Activated T-helper 1 cell treated with anti-CD3 and anti-CD28 coated beads, Interleukin-12 subunit alpha, Interleukin-12 subunit beta, Interleukin-2, Interleukin-4 antibody, amounts not matched to agents 30 ng/mL and 10 ng/mL and 1 ng/mL, durations not matched to agents 14 hours and 24 hours and 36 hours (primary cell): ENCODE measurements at regions of chr9 and their contacts with region 1.

Region 1: GRCh38 chr9:111896353-111896958 is at the start of gene UGCG:
- DNase-seq: peak; percentile 86
- H3K4me3 Mint-ChIP-seq: peak within 1 kb of the TSS; percentile 90
- H3K27ac Mint-ChIP-seq: peak within 1 kb of the TSS; percentile 87
- H3K4me1 Mint-ChIP-seq: peaks cover 19% of the 10 kb centered on the region
- H3K27me3 Mint-ChIP-seq: peaks cover 4% of the 10 kb centered on the region
- total RNA-seq, gene UGCG: 22.6 and 22.9 TPM in 2 replicates

Region 2: GRCh38 chr9:111661150-111661801 is 235.2 kb before region 1 on chr9 and contains the start of gene GNG10:
- intact Hi-C with region 1: loop called (anchors 5 kb)
- DNase-seq: peak; percentile 66
- H3K4me3 Mint-ChIP-seq: peak within 1 kb of the TSS; percentile 89
- H3K27ac Mint-ChIP-seq: peak within 1 kb of the TSS; percentile 89
- H3K4me1 Mint-ChIP-seq: peaks cover 34% of the 10 kb centered on the region
- H3K27me3 Mint-ChIP-seq: no peaks in the 10 kb centered on the region
- total RNA-seq, gene GNG10: 30.7 and 35.4 TPM in 2 replicates

Region 3: GRCh38 chr9:111937781-111938426 is 41.4 kb after region 1 on chr9:
- intact Hi-C with region 1: loop called (anchors 1 kb)
- DNase-seq: peak; percentile 28
- H3K4me3 Mint-ChIP-seq: peak overlapping the region; percentile 63
- H3K27ac Mint-ChIP-seq: peak overlapping the region; percentile 88
- H3K4me1 Mint-ChIP-seq: peaks cover 31% of the 10 kb centered on the region
- H3K27me3 Mint-ChIP-seq: no peaks in the 10 kb centered on the region

Region 4: DNA sequence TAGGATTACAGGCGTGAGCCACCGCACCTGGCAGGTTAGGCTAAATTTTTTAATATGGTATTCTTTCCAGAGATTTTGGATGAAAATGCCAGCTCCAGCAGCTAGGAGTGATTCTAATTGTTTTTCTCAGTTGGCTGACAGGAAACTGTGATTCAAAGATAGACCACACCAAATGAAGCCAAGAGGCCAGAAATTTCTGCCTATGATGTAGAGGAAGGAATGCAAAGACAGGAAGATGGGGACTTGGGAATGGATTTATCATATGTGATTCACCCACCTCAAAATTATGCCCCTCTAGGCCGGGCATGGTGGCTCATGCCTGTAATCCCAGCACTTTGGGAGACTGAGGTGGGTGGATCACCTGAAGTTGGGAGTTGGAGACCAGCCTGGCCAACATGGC is 53.5 kb after region 1 on chr9:
- intact Hi-C with region 1: no loop called
- DNase-seq: no peak
- H3K4me3 Mint-ChIP-seq: no peak overlapping the region
- H3K27ac Mint-ChIP-seq: no peak overlapping the region
- H3K4me1 Mint-ChIP-seq: peaks cover 10% of the 10 kb centered on the region
- H3K27me3 Mint-ChIP-seq: peaks cover 11% of the 10 kb centered on the region

Region 5: DNA sequence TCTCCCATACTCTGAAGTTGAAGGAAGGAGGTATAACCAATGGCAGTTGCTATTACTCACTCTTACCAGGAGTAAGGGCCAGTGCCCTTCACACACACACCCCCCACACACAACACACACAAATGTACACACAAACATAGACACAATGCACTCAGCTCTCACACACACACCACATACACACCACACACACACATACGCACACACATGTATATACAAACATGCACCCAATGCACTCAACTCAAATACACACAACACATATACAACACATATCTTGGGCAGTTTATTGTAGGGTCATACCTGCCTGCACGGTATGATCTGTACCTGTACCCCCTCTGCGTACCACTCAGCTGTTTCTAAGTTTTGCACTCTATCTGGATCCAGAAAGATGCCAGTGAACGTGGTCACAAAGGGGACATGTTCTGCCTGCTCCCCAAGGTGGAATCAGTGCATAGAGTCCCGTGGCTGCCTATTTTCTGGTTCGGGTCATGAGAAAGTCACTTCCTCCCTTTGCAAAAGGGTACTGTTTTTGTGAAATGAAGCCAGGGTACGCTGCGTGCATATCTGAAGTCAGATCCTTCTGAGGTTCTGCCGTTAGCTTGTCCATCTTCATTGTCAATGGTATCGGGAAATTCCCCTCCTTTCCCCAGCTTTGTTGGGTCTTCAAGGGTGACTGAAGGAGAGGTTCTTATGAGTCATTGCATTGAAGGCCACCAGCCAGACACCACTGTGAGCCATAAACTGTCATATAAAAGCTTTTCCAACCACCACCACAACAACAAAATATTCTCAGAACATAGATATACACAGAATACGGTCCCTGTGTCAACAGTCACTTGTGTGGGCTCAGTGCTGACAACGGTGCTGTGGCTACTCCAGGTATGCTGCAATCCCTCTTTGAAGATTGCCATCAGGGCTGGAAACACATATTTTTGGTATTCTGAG is 132.1 kb after region 1 on chr9:
- intact Hi-C with region 1: loop called (anchors 2 kb)
- DNase-seq: peak; percentile 6
- H3K4me3 Mint-ChIP-seq: peak overlapping the region; percentile 5
- H3K27ac Mint-ChIP-seq: peak overlapping the region; percentile 49
- H3K4me1 Mint-ChIP-seq: peaks cover 48% of the 10 kb centered on the region
- H3K27me3 Mint-ChIP-seq: peaks cover 4% of the 10 kb centered on the region

Region 6: DNA sequence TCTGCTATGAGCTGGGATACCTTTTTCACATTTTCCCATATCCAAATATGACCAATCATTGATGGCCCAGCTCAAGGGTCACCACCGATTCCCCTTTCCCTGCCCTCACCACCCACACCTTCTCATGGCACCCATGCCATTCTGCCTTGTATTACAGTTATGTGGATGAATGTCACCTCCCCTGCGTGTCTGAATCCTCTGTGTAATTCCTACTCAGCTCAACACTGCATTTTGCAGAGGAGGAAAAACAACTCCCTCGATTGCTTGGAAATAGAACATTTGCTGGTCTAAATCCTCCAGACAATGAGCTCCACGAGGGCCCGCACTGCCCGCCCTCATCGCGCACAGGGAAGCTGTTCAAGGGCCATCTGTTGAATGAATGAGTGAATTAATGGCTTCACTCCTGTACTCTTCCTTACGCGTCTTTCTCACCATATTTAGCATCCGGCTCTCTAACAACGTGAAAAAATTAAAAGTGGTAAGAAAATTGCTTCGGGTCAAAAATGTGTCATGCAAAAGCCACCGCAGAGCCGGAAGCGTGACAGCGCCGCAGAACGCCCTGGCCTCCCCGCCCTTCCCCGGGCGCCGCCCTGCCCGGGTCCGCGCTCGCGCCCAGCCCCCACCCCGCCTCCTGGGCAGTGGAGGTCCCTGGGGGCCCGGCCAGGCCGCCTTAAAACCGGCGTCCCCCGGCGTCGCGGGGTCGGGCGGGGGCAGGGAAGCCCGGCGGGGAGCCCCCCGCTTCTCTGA is 277.9 kb after region 1 on chr9:
- intact Hi-C with region 1: loop called (anchors 10 kb)
- DNase-seq: peak; percentile 73
- H3K4me3 Mint-ChIP-seq: peak overlapping the region; percentile 88
- H3K27ac Mint-ChIP-seq: peak overlapping the region; percentile 93
- H3K4me1 Mint-ChIP-seq: peaks cover 74% of the 10 kb centered on the region
- H3K27me3 Mint-ChIP-seq: peaks cover 1% of the 10 kb centered on the region

Region 7: GRCh38 chr9:112249277-112249676 is 352.8 kb after region 1 on chr9:
- intact Hi-C with region 1: no loop called
- DNase-seq: no peak
- H3K4me3 Mint-ChIP-seq: no peak overlapping the region
- H3K27ac Mint-ChIP-seq: peak overlapping the region; percentile 3
- H3K4me1 Mint-ChIP-seq: peaks cover 18% of the 10 kb centered on the region
- H3K27me3 Mint-ChIP-seq: no peaks in the 10 kb centered on the region

Region 8: DNA sequence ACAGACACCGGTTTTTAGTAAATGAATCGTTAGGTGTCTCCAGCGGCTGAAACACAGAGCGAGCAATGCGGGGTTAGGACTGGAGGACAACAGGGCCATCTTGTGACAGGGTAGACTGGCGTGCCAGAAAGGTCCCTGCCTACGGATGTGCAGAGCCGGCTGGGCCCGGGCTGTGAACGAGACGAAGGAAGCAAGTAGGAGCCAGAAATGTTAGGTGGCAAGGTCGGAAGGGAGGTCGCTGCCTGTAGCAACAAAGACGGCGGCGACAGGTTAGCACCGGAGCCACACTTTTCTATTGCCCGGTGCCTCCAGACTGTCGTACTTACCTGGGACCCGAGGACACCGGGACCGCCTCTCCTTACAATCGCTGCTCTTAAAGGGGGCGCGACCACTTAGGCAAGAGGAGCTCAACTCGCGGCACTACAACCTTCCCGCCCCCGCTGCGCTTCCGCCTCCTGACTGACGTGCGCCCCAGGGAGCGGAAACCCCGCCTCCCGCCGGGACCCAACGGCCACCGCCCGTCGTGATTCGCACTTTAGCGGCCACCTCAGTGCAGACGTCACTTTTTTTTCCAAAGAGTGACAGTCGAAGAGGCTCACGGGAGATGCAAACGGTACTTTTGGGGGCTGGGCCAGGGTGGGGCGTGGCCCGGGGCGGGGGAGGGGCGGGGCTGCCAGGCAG is 821.3 kb after region 1 on chr9 and contains the start of gene INIP:
- intact Hi-C with region 1: loop called (anchors 5 kb)
- DNase-seq: peak; percentile 98
- H3K4me3 Mint-ChIP-seq: peak within 1 kb of the TSS; percentile 99
- H3K27ac Mint-ChIP-seq: peak within 1 kb of the TSS; percentile 100
- H3K4me1 Mint-ChIP-seq: peaks cover 35% of the 10 kb centered on the region
- H3K27me3 Mint-ChIP-seq: no peaks in the 10 kb centered on the region
- total RNA-seq, gene INIP: 38.3 and 46.4 TPM in 2 replicates